A549 (cell line): ENCODE measurements at regions of chr13 and their contacts with region 1.

Region 1: DNA sequence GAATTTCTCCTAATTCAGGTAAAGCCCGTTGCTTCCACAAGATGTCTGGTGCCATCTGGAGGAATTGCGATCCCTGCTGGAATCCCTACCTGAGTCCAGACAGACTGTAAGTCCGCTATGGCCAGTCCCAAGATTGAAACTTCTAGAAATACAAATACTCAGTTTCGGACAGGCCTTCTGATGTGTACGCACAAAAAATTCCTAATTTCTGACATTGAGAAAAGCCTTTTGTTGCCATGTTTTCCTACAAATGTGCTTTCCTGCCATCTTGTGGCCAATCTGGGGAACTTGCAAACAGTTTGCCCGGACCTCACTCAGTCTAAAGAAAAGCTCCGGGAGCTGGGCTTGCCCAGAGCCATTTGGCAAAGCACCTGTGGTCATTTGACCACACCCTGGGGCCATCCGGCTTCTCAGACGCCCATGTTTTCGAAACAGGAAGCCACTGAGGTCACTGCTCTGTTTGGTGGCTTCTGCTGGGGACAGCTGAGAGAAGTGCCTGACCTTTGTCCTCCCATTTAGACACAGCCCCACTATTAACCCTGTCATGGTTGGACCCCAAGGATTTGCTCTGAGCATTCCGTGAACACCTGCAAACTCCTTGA is 79.4 kb downstream of the SLC15A1 start:
- DNase-seq: peak; percentile 70 to 75
- ATAC-seq: peak; percentile 89 to 93
- H3K4me3 ChIP-seq: no peak overlapping the region
- H3K27ac ChIP-seq: peak overlapping the region; percentile 37 to 75; a peak in 4 of 6 replicates
- H3K4me1 ChIP-seq: peaks cover 4% of the 10 kb centered on the region; the same call in 2 of the 3 replicates
- CTCF ChIP-seq: peak; percentile 91
- EP300 ChIP-seq: no peak
- POLR2A ChIP-seq: no peak
- RAD21 ChIP-seq: peak; percentile 75 to 85

Region 2: GRCh38 chr13:98685146-98685545 is 12.1 kb after region 1 on chr13:
- CTCF ChIA-PET with region 1: interaction called, 11 read pairs
- POLR2A ChIA-PET with region 1: no interaction called
- DNase-seq: no peak
- ATAC-seq: no peak
- H3K4me3 ChIP-seq: no peak overlapping the region
- H3K27ac ChIP-seq: no peak overlapping the region
- H3K4me1 ChIP-seq: no peaks in the 10 kb centered on the region
- CTCF ChIP-seq: no peak
- EP300 ChIP-seq: no peak
- POLR2A ChIP-seq: no peak
- RAD21 ChIP-seq: no peak